Endothelial cell of umbilical vein (primary cell): ENCODE measurements at regions of chrX and their contacts with region 1.

Region 1: DNA sequence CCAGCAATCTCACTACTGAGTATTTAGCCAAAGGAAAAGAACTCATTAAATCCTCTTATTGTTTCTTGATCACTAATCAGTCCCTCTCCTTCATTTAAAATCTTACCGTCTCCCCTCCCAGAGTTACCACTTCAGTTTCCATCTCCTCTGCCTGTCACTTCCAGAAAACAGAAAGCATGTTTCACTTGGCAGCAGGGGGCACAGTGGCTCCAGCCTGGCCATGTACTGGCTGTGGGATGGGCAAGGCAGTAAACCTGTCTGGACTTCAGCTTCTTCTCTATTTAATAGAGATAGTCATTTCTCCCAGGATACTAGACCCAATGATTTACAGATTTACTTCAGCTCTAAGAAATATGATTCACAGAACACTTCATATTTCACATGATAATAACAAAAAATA is 63.2 kb downstream of the CD40LG start:
- DNase-seq: peak; percentile 29
- H3K4me3 ChIP-seq: no peak overlapping the region
- H3K27ac ChIP-seq: no peak overlapping the region
- H3K4me1 ChIP-seq: no peaks in the 10 kb centered on the region
- H3K27me3 ChIP-seq: no peaks in the 10 kb centered on the region
- CTCF ChIP-seq: peak in 1 of 2 donors; percentile 29
- POLR2A ChIP-seq: no peak

Region 2: DNA sequence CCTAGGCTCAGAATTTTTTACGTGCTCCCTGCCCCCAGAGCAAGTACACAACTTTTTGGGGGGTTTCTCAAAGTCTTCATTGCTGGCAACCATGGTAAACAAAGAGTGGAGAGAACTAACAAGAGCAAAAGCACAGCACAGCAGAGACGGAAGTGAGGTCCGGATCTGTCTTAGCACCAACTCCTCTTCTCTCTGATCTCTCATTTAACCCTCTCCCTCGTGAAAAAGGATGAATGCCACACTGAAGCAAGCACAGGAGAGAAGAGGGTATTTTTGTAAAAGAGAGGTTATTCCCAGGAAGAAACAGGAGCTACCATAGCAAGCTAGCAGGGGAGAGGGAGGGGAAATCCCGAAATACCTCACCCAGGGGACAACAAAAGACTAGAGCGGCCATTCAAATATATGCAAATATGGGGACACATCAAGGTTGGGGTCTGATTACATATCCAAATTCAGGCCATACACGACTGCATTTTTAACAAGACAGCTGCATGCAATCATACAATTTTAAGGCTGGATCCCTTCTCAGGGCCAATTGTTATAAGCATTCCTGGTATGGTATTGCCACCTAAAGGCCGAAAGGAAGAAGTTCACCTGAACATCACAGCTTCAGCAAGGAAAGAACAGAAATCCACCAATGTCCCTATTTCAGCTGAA is 16.6 kb before region 1 on chrX:
- CTCF ChIA-PET with region 1: interaction called, 25 read pairs
- POLR2A ChIA-PET with region 1: no interaction called
- dilution Hi-C with region 1: no loop called
- intact Hi-C with region 1: no loop called
- DNase-seq: peak; percentile 19
- H3K4me3 ChIP-seq: no peak overlapping the region
- H3K27ac ChIP-seq: no peak overlapping the region
- H3K4me1 ChIP-seq: no peaks in the 10 kb centered on the region
- H3K27me3 ChIP-seq: no peaks in the 10 kb centered on the region
- CTCF ChIP-seq: peak; percentile 32 to 33
- POLR2A ChIP-seq: no peak

Region 3: GRCh38 chrX:136920001-136920400 is 208.9 kb after region 1 on chrX:
- CTCF ChIA-PET with region 1: interaction called, 6 read pairs
- POLR2A ChIA-PET with region 1: no interaction called
- dilution Hi-C with region 1: no loop called
- intact Hi-C with region 1: loop called (anchors 1 kb)
- DNase-seq: peak; percentile 50
- H3K4me3 ChIP-seq: no peak overlapping the region
- H3K27ac ChIP-seq: no peak overlapping the region
- H3K4me1 ChIP-seq: no peaks in the 10 kb centered on the region
- H3K27me3 ChIP-seq: no peaks in the 10 kb centered on the region
- CTCF ChIP-seq: no peak
- POLR2A ChIP-seq: no peak

Region 4: DNA sequence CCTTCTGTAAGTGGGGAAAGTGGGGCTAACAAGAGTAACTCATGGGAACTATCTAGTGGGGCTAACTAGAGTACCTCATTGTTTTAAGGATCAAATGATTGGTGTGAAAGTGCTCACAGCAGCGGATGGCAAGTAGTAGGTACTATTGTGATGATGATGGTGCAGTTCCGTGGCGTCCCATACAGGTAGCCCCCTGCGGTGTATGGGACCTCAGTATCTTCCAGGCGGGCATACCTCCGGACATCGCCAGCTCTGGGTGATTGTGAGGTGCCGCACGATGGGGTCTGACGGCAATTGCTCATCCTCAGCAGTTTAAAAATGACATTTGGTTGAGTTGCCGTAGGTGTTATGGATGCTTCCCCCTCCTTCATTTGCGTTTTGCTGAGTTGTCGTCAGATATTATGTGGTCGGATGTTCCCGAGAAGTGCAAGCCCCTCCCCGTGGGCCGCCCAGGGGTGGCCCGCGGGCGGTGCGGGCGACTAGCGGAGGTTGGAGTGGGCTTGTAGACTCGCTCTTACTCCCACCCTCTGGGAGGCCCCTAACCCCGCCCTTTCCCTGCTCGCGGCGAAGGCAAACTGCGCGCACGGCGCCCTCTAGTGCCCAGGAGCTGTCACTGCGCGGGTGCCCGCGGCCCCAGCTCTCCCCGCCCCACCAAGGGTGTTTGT is 341.0 kb after region 1 on chrX:
- CTCF ChIA-PET with region 1: interaction called, 7 read pairs
- POLR2A ChIA-PET with region 1: no interaction called
- dilution Hi-C with region 1: no loop called
- intact Hi-C with region 1: loop called (anchors 5 kb)
- DNase-seq: peak; percentile 41
- H3K4me3 ChIP-seq: peak overlapping the region in 2 of 3 experiments; percentile 26 to 28
- H3K27ac ChIP-seq: no peak overlapping the region
- H3K4me1 ChIP-seq: no peaks in the 10 kb centered on the region
- H3K27me3 ChIP-seq: peaks cover 9 to 23% of the 10 kb centered on the region in 2 experiments
- CTCF ChIP-seq: peak; percentile 70 to 91
- POLR2A ChIP-seq: no peak